Aorta (tissue), 5 donors: ENCODE measurements at regions of chr3 and their contacts with region 1.

Region 1: GRCh38 chr3:66500576-66501482 is at the start of gene LRIG1:
- DNase-seq: peak; percentile 99 to 100
- ATAC-seq: peak; percentile 97
- H3K4me3 ChIP-seq: peak within 1 kb of the TSS; percentile 68 to 82
- H3K27ac ChIP-seq: peak within 1 kb of the TSS; percentile 84 to 87
- H3K4me1 ChIP-seq: peaks cover 0 to under 1% of the 10 kb centered on the region in 2 donors
- H3K27me3 ChIP-seq: no peaks in the 10 kb centered on the region
- total RNA-seq, gene LRIG1: 75.7 to 115 TPM

Region 2: GRCh38 chr3:66442254-66443117 is 58.3 kb before region 1 on chr3:
- intact Hi-C with region 1: loop called in 1 of 2 experiments (anchors 10 kb)
- DNase-seq: peak in 1 of 2 donors; percentile 70
- ATAC-seq: peak; percentile 82
- H3K4me3 ChIP-seq: no peak overlapping the region
- H3K27ac ChIP-seq: peak overlapping the region; percentile 66 to 73
- H3K4me1 ChIP-seq: peaks cover 7% of the 10 kb centered on the region in 2 donors
- H3K27me3 ChIP-seq: no peaks in the 10 kb centered on the region

Region 3: GRCh38 chr3:66593964-66594363 is 93.1 kb after region 1 on chr3:
- intact Hi-C with region 1: loop called (anchors 10 kb)
- DNase-seq: no peak
- ATAC-seq: no peak
- H3K4me3 ChIP-seq: no peak overlapping the region
- H3K27ac ChIP-seq: no peak overlapping the region
- H3K4me1 ChIP-seq: peaks cover 2 to 4% of the 10 kb centered on the region in 2 donors
- H3K27me3 ChIP-seq: no peaks in the 10 kb centered on the region

Region 4: GRCh38 chr3:67947808-67948508 is 1447.1 kb after region 1 on chr3:
- intact Hi-C with region 1: no loop called
- DNase-seq: no peak
- ATAC-seq: no peak
- H3K4me3 ChIP-seq: no peak overlapping the region
- H3K27ac ChIP-seq: no peak overlapping the region
- H3K4me1 ChIP-seq: no peaks in the 10 kb centered on the region
- H3K27me3 ChIP-seq: no peaks in the 10 kb centered on the region